Activated CD4-positive, alpha-beta memory T cell treated with anti-CD3 and anti-CD28 coated beads, Interleukin-2, amount 10 ng/mL, durations not matched to agents 7 days and 5 days (primary cell): ENCODE measurements at regions of chr15 and their contacts with region 1.

Region 1: GRCh38 chr15:34587717-34588674 is 4.5 kb upstream of the GOLGA8B start:
- DNase-seq: peak; percentile 74
- H3K4me3 Mint-ChIP-seq: peak overlapping the region; percentile 64
- H3K27ac Mint-ChIP-seq: no peak overlapping the region
- H3K4me1 Mint-ChIP-seq: peaks cover 27% of the 10 kb centered on the region
- H3K27me3 Mint-ChIP-seq: peaks cover 23% of the 10 kb centered on the region

Region 2: GRCh38 chr15:34101366-34102175 is 486.4 kb before region 1 on chr15 and contains the starts of genes EMC7 and PGBD4:
- CTCF ChIA-PET with region 1: interaction called, 3 read pairs
- POLR2A ChIA-PET with region 1: interaction called, 11 read pairs
- DNase-seq: peak; percentile 100
- H3K4me3 Mint-ChIP-seq: peak within 1 kb of the TSS; percentile 96
- H3K27ac Mint-ChIP-seq: peak within 1 kb of the TSS; percentile 90
- H3K4me1 Mint-ChIP-seq: peaks cover 37% of the 10 kb centered on the region
- H3K27me3 Mint-ChIP-seq: no peaks in the 10 kb centered on the region
- total RNA-seq, gene EMC7: 78.7 to 81.8 TPM
- total RNA-seq, gene PGBD4: 3.1 to 3.3 TPM

Region 3: DNA sequence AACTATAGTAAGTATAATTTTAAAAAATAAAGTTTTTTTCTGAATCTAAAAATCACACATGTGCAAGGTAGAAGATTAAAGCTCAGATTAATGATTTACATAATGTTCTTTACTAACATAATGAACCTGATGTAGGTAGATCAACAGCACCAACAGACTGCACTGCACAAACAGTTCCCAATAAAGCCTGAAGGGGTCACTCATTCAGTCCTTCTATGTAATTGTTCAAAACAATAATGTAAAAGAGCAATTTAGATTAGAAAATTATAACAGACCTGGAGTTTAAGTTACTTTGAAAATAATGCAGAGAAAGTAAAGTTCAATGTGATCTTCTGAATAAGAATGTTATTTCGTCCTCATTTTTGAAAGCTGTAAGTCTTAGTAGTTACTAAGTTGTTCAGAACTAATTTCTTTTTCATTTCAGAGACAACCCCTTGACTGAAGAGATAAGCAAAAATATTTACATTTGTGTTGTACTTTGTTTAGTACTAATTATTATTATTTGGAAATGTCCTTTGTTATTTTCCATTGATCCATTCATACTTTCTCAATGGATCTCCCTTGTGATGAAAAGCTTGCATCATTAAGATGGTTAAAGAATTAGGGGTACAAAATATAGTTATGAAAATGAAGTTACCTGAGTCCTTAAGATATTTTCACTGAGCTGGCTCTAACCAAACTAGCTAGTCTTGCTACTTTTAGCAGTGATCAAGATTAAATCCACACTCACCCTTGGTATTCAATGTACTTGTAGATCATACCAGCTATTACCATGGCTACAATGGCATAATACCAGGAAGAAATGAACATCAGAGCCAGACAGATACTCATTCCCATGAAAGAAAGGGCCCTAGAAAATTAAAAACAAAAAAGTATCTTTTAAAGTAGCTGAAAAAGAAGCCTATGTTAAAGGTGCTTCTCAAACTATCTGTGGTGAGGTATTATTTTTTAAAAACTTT is 346.3 kb before region 1 on chr15:
- CTCF ChIA-PET with region 1: interaction called, 12 read pairs
- POLR2A ChIA-PET with region 1: interaction called, 3 read pairs
- DNase-seq: peak; percentile 26
- H3K4me3 Mint-ChIP-seq: no peak overlapping the region
- H3K27ac Mint-ChIP-seq: no peak overlapping the region
- H3K4me1 Mint-ChIP-seq: peaks cover 29% of the 10 kb centered on the region
- H3K27me3 Mint-ChIP-seq: no peaks in the 10 kb centered on the region

Region 4: DNA sequence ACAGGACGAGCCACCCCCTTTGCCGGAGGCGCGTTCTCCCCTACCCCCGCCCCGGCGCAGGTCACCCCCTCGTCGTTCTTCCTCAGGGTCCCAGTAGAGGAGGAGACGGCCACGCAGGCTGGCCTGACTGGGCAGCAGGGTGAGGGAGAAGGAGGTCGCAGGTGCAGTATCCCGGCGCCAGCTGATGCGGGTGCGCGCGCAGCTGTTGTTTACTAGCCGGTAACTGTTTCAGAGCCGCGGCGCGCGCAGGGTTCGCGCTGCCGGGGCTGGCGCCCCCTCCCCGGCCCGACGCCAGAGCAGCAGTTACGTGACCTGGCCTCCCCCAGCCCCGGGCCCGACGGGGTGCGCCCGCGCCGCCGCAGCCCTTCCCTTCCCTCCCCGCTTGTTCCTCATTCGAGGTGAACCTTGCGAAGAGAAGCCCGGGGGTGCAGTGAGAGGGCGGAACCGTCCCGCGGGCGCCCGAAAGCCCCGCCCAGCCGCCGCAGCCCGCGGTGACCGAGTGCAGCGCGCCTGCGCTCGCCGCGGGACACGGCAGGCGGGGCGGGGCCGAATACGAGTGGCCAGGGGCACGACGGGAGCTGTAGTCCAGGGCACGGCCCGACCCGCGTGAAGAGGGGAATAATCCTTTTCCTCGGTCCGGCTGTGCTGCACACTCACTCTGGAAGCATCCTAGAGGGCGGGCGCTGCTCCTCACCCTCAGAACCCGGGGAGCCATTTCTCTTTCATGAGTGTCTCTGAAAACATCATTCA is 250.3 kb before region 1 on chr15 and contains the start of gene SLC12A6:
- CTCF ChIA-PET with region 1: interaction called, 25 read pairs
- POLR2A ChIA-PET with region 1: interaction called, 22 read pairs
- DNase-seq: peak; percentile 91
- H3K4me3 Mint-ChIP-seq: peak within 1 kb of the TSS; percentile 96
- H3K27ac Mint-ChIP-seq: peak within 1 kb of the TSS; percentile 95
- H3K4me1 Mint-ChIP-seq: peaks cover 65% of the 10 kb centered on the region
- H3K27me3 Mint-ChIP-seq: no peaks in the 10 kb centered on the region
- total RNA-seq, gene SLC12A6: 30.6 to 31.7 TPM

Region 5: GRCh38 chr15:34342737-34343575 is 245.0 kb before region 1 on chr15 and contains the starts of genes NOP10 and NUTM1:
- CTCF ChIA-PET with region 1: interaction called, 25 read pairs
- POLR2A ChIA-PET with region 1: interaction called, 16 read pairs
- DNase-seq: peak; percentile 95
- H3K4me3 Mint-ChIP-seq: no peak within 1 kb of the TSS
- H3K27ac Mint-ChIP-seq: peak within 1 kb of the TSS; percentile 74
- H3K4me1 Mint-ChIP-seq: peaks cover 26% of the 10 kb centered on the region
- H3K27me3 Mint-ChIP-seq: no peaks in the 10 kb centered on the region
- total RNA-seq, gene NOP10: 170 to 183 TPM
- total RNA-seq, gene NUTM1: not detected